ENCODE measurements at regions of chr4 and their contacts with region 1.

Region 1: DNA sequence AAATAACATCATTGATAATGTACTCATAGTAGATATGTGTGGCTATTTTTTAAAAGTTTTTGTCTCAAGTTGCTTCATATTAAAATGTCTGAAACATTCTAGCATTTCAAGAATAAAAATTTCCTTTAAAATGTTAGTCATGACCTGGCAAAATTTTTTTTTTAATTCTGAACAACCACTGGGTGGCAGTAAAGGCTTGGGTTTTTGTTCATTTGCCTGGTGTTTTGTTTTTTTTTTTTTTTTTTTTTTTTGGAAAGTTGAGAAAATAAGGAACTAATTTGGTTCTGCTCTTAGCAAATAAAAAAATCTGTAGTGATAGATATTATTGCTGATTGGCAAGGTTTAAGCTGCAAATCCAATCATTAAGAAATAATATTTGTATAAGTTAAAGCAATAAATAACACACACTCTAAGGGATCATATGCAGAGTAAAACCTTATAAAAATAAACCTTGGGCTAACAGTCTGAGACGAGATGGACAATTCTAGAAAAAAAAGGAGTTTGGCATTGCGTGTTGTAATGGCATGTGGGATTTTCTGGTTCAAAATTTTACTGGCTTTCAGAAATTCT is 81.4 kb downstream of the CEP44 start:
- DNase-seq: peak; percentile 15 to 68 (median 20)
- ATAC-seq: no peak
- H3K4me3 ChIP-seq: no peak overlapping the region
- H3K27ac ChIP-seq: no peak overlapping the region
- H3K4me1 ChIP-seq: no peaks in the 10 kb centered on the region
- H3K27me3 ChIP-seq: no peaks in the 10 kb centered on the region
- CTCF ChIP-seq: peak; percentile 17 to 67 (median 47); a peak in 3 of 6 replicates
- EP300 ChIP-seq: no peak
- POLR2A ChIP-seq: no peak
- RAD21 ChIP-seq: peak; percentile 55 to 80

Region 2: DNA sequence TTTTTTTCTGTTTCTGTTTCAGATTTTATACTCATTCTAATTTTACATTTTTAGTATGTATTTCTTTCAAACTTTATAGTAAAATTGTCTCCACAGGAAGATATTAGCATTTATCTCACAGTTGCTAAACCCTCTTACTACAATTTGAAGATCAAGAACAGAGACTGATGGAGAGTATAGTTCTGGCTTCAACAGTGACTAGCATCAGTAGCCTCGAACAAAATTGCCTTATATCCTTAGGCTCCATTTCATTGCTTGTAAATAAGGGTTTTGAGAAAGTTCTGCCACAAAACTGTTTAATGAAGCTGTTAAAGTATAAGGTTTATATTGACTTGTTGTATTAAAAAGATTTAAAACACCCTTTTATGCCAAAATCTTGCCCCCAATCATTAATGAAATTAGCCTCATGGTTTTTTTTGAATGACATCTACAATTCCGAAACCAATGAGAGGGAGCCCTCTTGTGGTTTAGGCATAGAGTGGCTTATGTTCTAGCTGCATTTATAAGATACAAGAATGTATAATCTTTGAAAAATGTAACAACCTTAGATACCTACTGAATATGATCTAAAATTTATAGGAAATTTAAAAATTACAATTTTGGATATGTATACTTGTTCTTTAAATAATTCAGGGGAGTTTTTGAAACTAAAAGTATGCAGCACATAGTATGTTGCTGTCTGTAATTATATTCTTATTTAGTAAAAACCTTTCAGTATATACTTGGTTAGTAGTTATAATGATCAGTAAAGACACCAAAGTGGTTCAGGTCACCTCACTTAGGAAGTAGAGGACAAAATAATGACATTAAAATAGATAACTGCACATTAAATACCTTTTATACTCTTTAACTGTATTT is 267.0 kb after region 1 on chr4:
- CTCF ChIA-PET with region 1: interaction called, 27 read pairs
- POLR2A ChIA-PET with region 1: no interaction called
- in situ Hi-C with region 1: loop called (anchors 10 kb)
- intact Hi-C with region 1: loop called (anchors 1 kb)
- DNase-seq: peak; percentile 24 to 71 (median 32)
- ATAC-seq: peak; percentile 90
- H3K4me3 ChIP-seq: no peak overlapping the region
- H3K27ac ChIP-seq: no peak overlapping the region
- H3K4me1 ChIP-seq: no peaks in the 10 kb centered on the region
- H3K27me3 ChIP-seq: no peaks in the 10 kb centered on the region
- CTCF ChIP-seq: peak; percentile 48 to 83 (median 58); a peak in 5 of 6 replicates
- EP300 ChIP-seq: no peak
- POLR2A ChIP-seq: no peak
- RAD21 ChIP-seq: peak; percentile 86 to 92

Region 3: DNA sequence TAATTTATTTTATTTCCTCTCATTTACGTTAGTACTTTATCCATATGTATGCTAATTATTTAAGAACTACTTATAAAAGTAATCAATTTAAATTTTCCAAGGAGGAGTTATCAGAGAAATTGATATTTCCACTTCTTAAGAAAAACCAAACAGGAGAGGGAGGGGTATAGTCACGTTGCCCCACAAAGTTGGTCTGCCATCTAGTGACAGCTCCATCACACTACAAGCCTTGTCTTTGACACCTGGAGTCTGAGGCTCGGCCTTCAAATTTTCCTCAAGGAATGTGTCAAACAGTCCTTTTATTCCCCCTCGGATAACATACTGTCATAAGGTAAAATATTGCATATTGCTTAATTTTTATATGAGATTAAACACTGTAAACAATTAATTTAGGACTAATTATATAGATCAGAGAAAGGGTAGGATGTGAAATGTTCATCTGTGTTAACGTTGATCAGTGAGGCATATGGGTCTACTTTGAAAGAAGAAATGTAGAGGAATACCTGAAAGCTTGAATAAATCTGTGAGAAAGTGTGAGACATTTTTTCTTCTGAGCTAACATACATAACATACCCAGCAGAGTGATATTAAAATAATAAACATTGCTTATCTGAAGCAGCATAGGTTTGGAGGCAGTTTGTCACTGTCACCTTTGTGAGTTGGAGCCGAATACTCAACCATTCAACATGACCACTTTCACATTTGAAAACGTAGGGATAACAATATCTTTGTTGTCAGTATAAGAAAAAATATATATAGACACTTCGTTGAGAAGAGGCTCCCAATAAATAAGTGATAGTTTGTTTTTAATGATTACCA is 349.5 kb after region 1 on chr4:
- CTCF ChIA-PET with region 1: interaction called, 26 read pairs
- POLR2A ChIA-PET with region 1: no interaction called
- in situ Hi-C with region 1: loop called (anchors 5 kb)
- intact Hi-C with region 1: loop called (anchors 1 kb)
- DNase-seq: peak; percentile 70 to 84 (median 72)
- ATAC-seq: peak; percentile 95
- H3K4me3 ChIP-seq: no peak overlapping the region
- H3K27ac ChIP-seq: no peak overlapping the region
- H3K4me1 ChIP-seq: no peaks in the 10 kb centered on the region; a peak in 1 of 5 replicates
- H3K27me3 ChIP-seq: no peaks in the 10 kb centered on the region
- CTCF ChIP-seq: peak; percentile 64 to 84 (median 81)
- EP300 ChIP-seq: no peak
- POLR2A ChIP-seq: no peak
- RAD21 ChIP-seq: peak; percentile 81 to 82

Region 4: DNA sequence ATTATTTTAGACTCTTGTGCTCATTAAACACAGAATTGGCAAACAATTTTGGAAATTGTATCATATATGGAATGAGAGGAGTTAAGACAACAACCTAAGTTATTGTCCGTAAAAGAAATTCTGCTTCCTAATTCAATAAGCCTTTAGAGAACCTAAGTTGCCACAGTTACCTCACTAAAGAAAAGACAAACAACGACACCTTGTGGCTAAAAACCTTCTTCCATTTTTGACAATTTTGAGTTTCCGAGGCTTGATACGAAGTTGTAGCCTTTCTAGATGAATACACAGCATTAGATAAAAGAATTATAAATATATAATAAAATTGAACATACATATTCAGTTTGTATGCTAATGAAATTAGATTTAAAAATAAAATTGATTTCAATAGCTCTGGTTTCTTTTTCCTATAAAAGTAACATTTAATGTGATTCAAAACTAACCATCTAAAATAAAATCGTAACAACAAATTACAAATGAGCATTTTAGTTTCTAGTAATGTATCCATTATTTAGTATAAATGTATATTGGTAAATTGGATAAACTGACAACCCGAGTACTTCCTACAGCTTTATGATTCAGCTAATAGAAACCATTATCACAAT is 1171.8 kb after region 1 on chr4:
- CTCF ChIA-PET with region 1: no interaction called
- POLR2A ChIA-PET with region 1: no interaction called
- in situ Hi-C with region 1: loop called (anchors 25 kb)
- intact Hi-C with region 1: loop called (anchors 5 kb)
- DNase-seq: peak; percentile 10 to 30 (median 20)
- ATAC-seq: no peak
- H3K4me3 ChIP-seq: no peak overlapping the region
- H3K27ac ChIP-seq: no peak overlapping the region
- H3K4me1 ChIP-seq: no peaks in the 10 kb centered on the region
- H3K27me3 ChIP-seq: no peaks in the 10 kb centered on the region
- CTCF ChIP-seq: peak in 1 of 3 experiments; percentile 41; a peak in 2 of 6 replicates
- EP300 ChIP-seq: no peak
- POLR2A ChIP-seq: no peak
- RAD21 ChIP-seq: peak; percentile 46 to 50